ENCODE measurements at regions of chr4 and their contacts with region 1.

Region 1: GRCh38 chr4:117134386-117134785 is 49.0 kb upstream of the TRAM1L1 start:
- DNase-seq: peak; percentile 29 to 36
- H3K4me3 ChIP-seq: no peak overlapping the region
- H3K27ac ChIP-seq: no peak overlapping the region
- H3K4me1 ChIP-seq: no peaks in the 10 kb centered on the region
- H3K27me3 ChIP-seq: no peaks in the 10 kb centered on the region
- CTCF ChIP-seq: peak; percentile 67

Region 2: GRCh38 chr4:117400039-117400835 is 265.9 kb after region 1 on chr4:
- CTCF ChIA-PET with region 1: no interaction called
- POLR2A ChIA-PET with region 1: no interaction called
- intact Hi-C with region 1: loop called (anchors 10 kb)
- DNase-seq: peak in 1 of 2 experiments; percentile 67
- H3K4me3 ChIP-seq: peak overlapping the region; percentile 11; the same call in 1 of the 2 replicates
- H3K27ac ChIP-seq: peak overlapping the region; percentile 32; the same call in 1 of the 2 replicates
- H3K4me1 ChIP-seq: peaks cover 18% of the 10 kb centered on the region
- H3K27me3 ChIP-seq: no peaks in the 10 kb centered on the region
- CTCF ChIP-seq: no peak

Region 3: GRCh38 chr4:117560329-117560728 is 425.9 kb after region 1 on chr4:
- CTCF ChIA-PET with region 1: no interaction called
- POLR2A ChIA-PET with region 1: no interaction called
- intact Hi-C with region 1: loop called (anchors 5 kb)
- DNase-seq: no peak
- H3K4me3 ChIP-seq: no peak overlapping the region
- H3K27ac ChIP-seq: no peak overlapping the region
- H3K4me1 ChIP-seq: no peaks in the 10 kb centered on the region
- H3K27me3 ChIP-seq: no peaks in the 10 kb centered on the region
- CTCF ChIP-seq: peak; percentile 32; the same call in 1 of the 2 replicates

Region 4: DNA sequence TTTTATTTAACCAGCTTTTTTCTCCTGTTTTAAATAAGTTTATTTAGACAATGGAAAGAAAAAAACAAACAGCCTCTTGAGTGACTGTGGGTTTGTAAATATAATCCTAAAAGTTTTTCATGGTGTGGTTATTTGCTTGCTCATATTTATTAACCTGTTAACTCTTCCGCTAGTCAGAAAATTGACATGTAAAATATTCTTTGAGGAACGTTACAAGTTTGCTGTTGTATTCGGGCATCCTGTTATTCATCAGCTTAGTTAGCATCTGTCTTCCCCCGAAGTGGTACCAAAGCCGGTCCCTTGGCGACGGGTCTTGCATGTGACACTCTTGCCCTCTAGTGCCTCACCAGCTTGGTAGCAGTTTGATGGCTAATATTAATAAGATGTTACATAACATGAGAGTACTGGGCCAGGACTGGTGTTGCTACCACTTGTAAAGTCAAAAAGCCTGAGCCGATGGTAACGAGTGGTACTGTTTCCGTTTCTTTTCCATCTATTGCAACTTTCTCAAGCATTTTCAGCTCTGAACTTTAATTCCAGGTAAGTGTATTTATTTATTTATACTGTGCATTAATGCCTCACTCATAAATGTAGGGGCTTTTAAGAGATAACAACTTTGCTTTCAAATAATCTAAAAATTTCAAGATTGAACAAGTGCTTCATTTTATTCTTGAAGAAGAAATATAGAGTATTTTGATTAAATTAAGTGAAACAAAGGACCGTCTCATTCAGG is 899.8 kb after region 1 on chr4 and contains the start of gene NDST3:
- CTCF ChIA-PET with region 1: no interaction called
- POLR2A ChIA-PET with region 1: no interaction called
- intact Hi-C with region 1: loop called (anchors 1 kb)
- DNase-seq: peak; percentile 48 to 58
- H3K4me3 ChIP-seq: peak within 1 kb of the TSS; percentile 57; the same call in 1 of the 2 replicates
- H3K27ac ChIP-seq: no peak within 1 kb of the TSS
- H3K4me1 ChIP-seq: no peaks in the 10 kb centered on the region
- H3K27me3 ChIP-seq: no peaks in the 10 kb centered on the region
- CTCF ChIP-seq: peak; percentile 60
- total RNA-seq, gene NDST3: 0.15 TPM in 1 of 2 replicates, not detected in the other

Region 5: GRCh38 chr4:118224239-118224829 is 1089.9 kb after region 1 on chr4:
- CTCF ChIA-PET with region 1: no interaction called
- POLR2A ChIA-PET with region 1: no interaction called
- intact Hi-C with region 1: loop called (anchors 5 kb)
- DNase-seq: no peak
- H3K4me3 ChIP-seq: no peak overlapping the region
- H3K27ac ChIP-seq: no peak overlapping the region
- H3K4me1 ChIP-seq: no peaks in the 10 kb centered on the region
- H3K27me3 ChIP-seq: no peaks in the 10 kb centered on the region
- CTCF ChIP-seq: peak; percentile 72

Region 6: GRCh38 chr4:118270492-118270891 is 1136.1 kb after region 1 on chr4:
- CTCF ChIA-PET with region 1: no interaction called
- POLR2A ChIA-PET with region 1: no interaction called
- intact Hi-C with region 1: loop called (anchors 1 kb)
- DNase-seq: peak in 1 of 2 experiments; percentile 36
- H3K4me3 ChIP-seq: no peak overlapping the region
- H3K27ac ChIP-seq: no peak overlapping the region
- H3K4me1 ChIP-seq: no peaks in the 10 kb centered on the region
- H3K27me3 ChIP-seq: no peaks in the 10 kb centered on the region
- CTCF ChIP-seq: peak; percentile 64